Activated CD8-positive, alpha-beta T cell treated with anti-CD3 and anti-CD28 coated beads, Interleukin-2, amount 10 ng/mL, durations not matched to agents 7 days and 5 days (primary cell): ENCODE measurements at regions of chr1 and their contacts with region 1.

Region 1: DNA sequence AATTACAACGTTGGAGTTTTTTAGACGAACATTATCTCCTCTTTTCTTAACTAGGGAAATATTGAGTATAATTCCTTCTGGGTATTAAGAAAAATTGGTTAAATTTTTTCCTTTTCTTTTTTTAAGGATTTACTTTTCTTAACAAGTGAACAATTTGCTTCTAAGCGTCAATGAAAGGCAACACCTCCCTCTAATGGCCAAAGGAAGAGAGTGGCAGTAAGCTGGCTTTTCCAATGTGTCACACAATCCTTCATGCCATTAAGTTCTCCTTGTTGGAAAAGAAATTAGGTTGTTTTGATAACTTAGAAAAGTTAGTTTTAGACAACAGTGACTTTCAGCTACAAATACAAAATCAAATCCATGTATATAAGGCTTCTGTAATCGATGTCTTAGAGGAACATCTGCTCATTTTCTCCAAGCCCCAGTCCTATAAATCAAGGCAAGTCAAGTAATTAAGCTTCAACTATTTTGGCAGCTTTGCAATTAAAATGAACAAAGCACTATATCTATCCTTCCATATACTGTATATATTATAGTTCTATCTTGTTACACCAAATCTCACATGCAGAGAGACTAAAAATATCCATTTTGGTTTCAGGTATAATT is 62.8 kb downstream of the EDEM3 start:
- DNase-seq: no peak
- ATAC-seq: no peak
- H3K4me3 Mint-ChIP-seq: no peak overlapping the region
- H3K27ac Mint-ChIP-seq: no peak overlapping the region
- H3K4me1 Mint-ChIP-seq: no peaks in the 10 kb centered on the region
- H3K27me3 Mint-ChIP-seq: no peaks in the 10 kb centered on the region

Region 2: GRCh38 chr1:184664042-184664655 is 27.7 kb before region 1 on chr1:
- CTCF ChIA-PET with region 1: interaction called, 10 read pairs
- POLR2A ChIA-PET with region 1: no interaction called
- DNase-seq: peak; percentile 64
- ATAC-seq: peak; percentile 81
- H3K4me3 Mint-ChIP-seq: no peak overlapping the region
- H3K27ac Mint-ChIP-seq: no peak overlapping the region
- H3K4me1 Mint-ChIP-seq: peaks cover 3% of the 10 kb centered on the region
- H3K27me3 Mint-ChIP-seq: peaks cover 26% of the 10 kb centered on the region